Naive thymus-derived CD4-positive, alpha-beta T cell (primary cell): ENCODE measurements at regions of chr6 and their contacts with region 1.

Region 1: DNA sequence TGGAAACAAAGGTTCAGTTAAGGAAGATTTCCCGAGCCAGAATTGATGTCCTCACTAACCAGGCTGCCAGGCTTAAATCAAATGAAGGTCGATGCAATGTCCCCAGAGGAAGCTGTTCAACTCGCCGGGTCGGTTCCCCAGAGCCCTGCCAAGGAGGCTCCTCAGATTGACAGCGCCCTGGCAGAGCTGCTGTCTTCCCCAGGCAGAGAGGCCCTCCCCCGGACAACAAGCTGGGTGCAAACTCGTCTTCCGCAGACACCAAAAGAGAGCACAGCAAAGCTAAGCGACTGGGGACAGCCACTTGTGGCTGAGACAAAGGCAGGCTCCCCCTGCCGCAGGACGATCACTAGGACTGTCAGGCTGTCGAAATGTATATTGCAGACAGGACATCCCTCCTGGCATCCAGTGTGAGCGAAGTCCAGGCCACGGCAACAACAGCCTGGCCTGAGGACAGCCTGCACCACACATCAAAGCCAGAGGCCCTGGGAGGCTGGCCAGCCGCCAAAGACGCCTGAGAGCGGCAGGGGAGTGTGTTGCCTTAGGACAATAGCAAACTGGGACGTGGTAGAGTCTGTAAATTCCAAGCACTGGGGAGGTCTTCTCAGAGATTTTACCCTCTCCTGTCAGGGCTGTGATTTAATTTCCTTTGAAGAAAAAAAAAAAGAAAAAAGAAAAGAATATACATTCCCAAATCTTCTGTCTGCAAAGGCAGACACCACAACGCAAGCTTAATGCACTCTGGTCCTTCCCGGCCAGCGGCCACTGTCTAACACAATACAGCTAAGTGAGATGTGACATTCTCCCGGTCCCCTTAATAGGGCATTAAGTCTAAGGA is 99.1 kb downstream of the HIVEP2 start:
- DNase-seq: peak; percentile 27 to 70 (median 63)
- ATAC-seq: peak; percentile 72
- H3K4me3 ChIP-seq: peak overlapping the region; percentile 44
- H3K4me3 Mint-ChIP-seq: peak overlapping the region; percentile 84 to 93 (median 86)
- H3K27ac ChIP-seq: peak overlapping the region; percentile 84
- H3K27ac Mint-ChIP-seq: peak overlapping the region; percentile 91 to 100 (median 95)
- H3K4me1 ChIP-seq: peaks cover 69 to 74% of the 10 kb centered on the region in 2 donors
- H3K4me1 Mint-ChIP-seq: peaks cover 49 to 99% (median 86%) of the 10 kb centered on the region in 7 donors
- H3K27me3 ChIP-seq: no peaks in the 10 kb centered on the region
- H3K27me3 Mint-ChIP-seq: no peaks in the 10 kb centered on the region

Region 2: GRCh38 chr6:142819603-142820337 is 26.1 kb before region 1 on chr6:
- CTCF ChIA-PET with region 1: no interaction called
- POLR2A ChIA-PET with region 1: interaction called, 71 read pairs
- intact Hi-C with region 1: loop called in 1 of 2 experiments (anchors 1 kb)
- DNase-seq: peak in 6 of 9 donors; percentile 27 to 80 (median 44)
- ATAC-seq: peak; percentile 75
- H3K4me3 ChIP-seq: peak overlapping the region; percentile 66
- H3K4me3 Mint-ChIP-seq: peak overlapping the region; percentile 72 to 93 (median 89)
- H3K27ac ChIP-seq: peak overlapping the region; percentile 82
- H3K27ac Mint-ChIP-seq: peak overlapping the region; percentile 68 to 99 (median 92)
- H3K4me1 ChIP-seq: peaks cover 59 to 67% of the 10 kb centered on the region in 2 donors
- H3K4me1 Mint-ChIP-seq: peaks cover 52 to 95% (median 83%) of the 10 kb centered on the region in 7 donors
- H3K27me3 ChIP-seq: no peaks in the 10 kb centered on the region
- H3K27me3 Mint-ChIP-seq: no peaks in the 10 kb centered on the region

Region 3: DNA sequence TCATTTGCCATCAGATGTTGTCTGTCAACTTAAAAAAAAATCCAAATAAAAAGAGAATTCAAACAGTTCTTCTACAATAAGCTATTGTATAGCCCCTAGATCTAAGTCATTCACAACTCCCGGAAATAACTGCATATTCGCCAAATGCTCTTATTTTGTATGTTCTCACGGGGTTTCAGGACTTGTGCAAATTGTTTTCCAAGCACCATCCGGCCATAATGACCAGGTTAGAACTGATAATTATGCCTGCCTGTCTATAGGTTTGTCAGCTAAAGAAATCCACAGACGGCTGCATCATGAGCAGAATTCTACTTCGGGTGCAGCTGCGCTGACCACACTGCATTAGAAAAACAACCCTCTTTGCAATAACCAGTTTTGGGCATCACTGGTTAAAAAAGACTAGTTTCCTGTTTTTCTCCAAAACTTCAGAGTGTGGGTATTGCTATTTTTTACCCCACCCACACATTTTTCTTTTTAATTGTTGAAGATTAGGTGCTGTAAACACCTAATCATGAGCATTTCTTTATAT is 11.5 kb after region 1 on chr6:
- CTCF ChIA-PET with region 1: interaction called, 17 read pairs
- POLR2A ChIA-PET with region 1: interaction called, 200 read pairs
- intact Hi-C with region 1: loop called (anchors 1 kb)
- DNase-seq: peak in 7 of 9 donors; percentile 54 to 77 (median 68)
- ATAC-seq: peak; percentile 59
- H3K4me3 ChIP-seq: peak overlapping the region; percentile 54
- H3K4me3 Mint-ChIP-seq: peak overlapping the region; percentile 72 to 88 (median 84)
- H3K27ac ChIP-seq: peak overlapping the region; percentile 86
- H3K27ac Mint-ChIP-seq: peak overlapping the region; percentile 91 to 100 (median 98)
- H3K4me1 ChIP-seq: peaks cover 62 to 81% of the 10 kb centered on the region in 2 donors
- H3K4me1 Mint-ChIP-seq: peaks cover 54 to 98% (median 93%) of the 10 kb centered on the region in 7 donors
- H3K27me3 ChIP-seq: no peaks in the 10 kb centered on the region
- H3K27me3 Mint-ChIP-seq: no peaks in the 10 kb centered on the region

Region 4: GRCh38 chr6:142913511-142914047 is 67.7 kb after region 1 on chr6:
- CTCF ChIA-PET with region 1: interaction called, 3 read pairs
- POLR2A ChIA-PET with region 1: interaction called, 4 read pairs
- intact Hi-C with region 1: loop called (anchors 1 kb)
- DNase-seq: peak; percentile 34 to 83 (median 80)
- ATAC-seq: peak; percentile 93
- H3K4me3 ChIP-seq: peak overlapping the region; percentile 55
- H3K4me3 Mint-ChIP-seq: peak overlapping the region; percentile 71 to 94 (median 87)
- H3K27ac ChIP-seq: peak overlapping the region; percentile 82
- H3K27ac Mint-ChIP-seq: peak overlapping the region in 7 of 9 donors; percentile 95 to 100 (median 99)
- H3K4me1 ChIP-seq: peaks cover 52 to 75% of the 10 kb centered on the region in 2 donors
- H3K4me1 Mint-ChIP-seq: peaks cover 52 to 96% (median 93%) of the 10 kb centered on the region in 7 donors
- H3K27me3 ChIP-seq: no peaks in the 10 kb centered on the region
- H3K27me3 Mint-ChIP-seq: no peaks in the 10 kb centered on the region

Region 5: DNA sequence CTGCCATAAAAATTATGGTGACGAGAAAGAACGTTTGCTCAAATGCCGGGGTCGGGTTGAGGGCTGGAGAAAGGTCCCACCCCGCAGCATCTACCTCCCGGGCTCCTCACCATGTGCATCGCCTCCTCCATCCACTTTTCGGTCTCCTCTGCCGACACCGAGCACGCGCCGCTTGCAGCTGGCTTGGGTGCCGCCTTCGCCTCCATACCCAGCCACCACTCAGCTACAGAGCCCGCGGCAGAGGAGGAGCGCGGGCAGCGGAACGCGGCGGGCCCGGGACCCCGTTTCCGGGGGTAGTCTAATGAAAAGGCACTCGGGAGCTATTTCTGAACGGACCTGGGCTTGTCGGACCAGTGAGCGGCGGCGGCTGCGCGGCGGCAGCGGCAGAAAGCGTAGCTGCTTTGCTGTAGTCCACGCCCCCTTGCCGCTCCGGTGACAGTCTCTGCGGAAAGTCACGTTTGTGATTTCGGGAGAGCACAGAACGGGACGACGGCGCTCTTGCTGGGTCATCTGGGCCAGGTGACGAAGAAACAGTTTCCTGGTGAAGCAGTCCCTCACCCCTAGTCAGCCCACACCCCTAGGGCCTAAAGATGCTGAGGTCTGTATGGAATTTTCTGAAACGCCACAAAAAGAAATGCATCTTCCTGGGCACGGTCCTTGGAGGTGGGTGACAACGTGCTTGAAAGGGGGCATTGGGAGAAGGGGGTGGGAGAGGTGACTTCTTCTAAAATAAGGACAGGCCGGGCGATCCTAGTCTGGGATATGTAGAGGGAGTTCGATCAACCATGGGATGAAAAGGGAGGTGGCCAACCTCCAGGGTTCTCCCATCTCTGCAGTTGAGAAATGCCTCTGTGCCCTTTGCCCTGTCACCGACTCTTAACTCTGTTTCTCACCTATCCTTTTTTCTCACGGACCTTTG is 604.9 kb after region 1 on chr6 and contains the starts of genes ADAT2 and PEX3:
- CTCF ChIA-PET with region 1: no interaction called
- POLR2A ChIA-PET with region 1: no interaction called
- intact Hi-C with region 1: loop called (anchors 5 kb)
- DNase-seq: peak; percentile 87 to 95 (median 94)
- ATAC-seq: peak; percentile 98
- H3K4me3 ChIP-seq: peak within 1 kb of the TSS; percentile 89
- H3K4me3 Mint-ChIP-seq: peak within 1 kb of the TSS; percentile 84 to 100 (median 99)
- H3K27ac ChIP-seq: peak within 1 kb of the TSS; percentile 80
- H3K27ac Mint-ChIP-seq: peak within 1 kb of the TSS; percentile 93 to 99 (median 96)
- H3K4me1 ChIP-seq: peaks cover 14 to 18% of the 10 kb centered on the region in 2 donors
- H3K4me1 Mint-ChIP-seq: peaks cover 20 to 61% (median 49%) of the 10 kb centered on the region in 7 donors
- H3K27me3 ChIP-seq: no peaks in the 10 kb centered on the region
- H3K27me3 Mint-ChIP-seq: no peaks in the 10 kb centered on the region
- total RNA-seq, gene ADAT2: 18.4 to 25.8 (median 20.8) TPM
- total RNA-seq, gene PEX3: 10.9 to 28.8 (median 19.1) TPM